PC-9 (cell line): ENCODE measurements at regions of chr4 and their contacts with region 1.

Region 1: GRCh38 chr4:68175562-68176155 is 46.0 kb upstream of the TMPRSS11F start:
- DNase-seq: peak; percentile 27 to 36
- H3K4me3 ChIP-seq: no peak overlapping the region
- H3K27ac ChIP-seq: no peak overlapping the region
- H3K4me1 ChIP-seq: peaks cover 2% of the 10 kb centered on the region
- H3K27me3 ChIP-seq: no peaks in the 10 kb centered on the region
- CTCF ChIP-seq: peak; percentile 75

Region 2: GRCh38 chr4:67871867-67872266 is 303.8 kb before region 1 on chr4:
- CTCF ChIA-PET with region 1: no interaction called
- POLR2A ChIA-PET with region 1: no interaction called
- intact Hi-C with region 1: loop called (anchors 2 kb)
- DNase-seq: no peak
- H3K4me3 ChIP-seq: no peak overlapping the region
- H3K27ac ChIP-seq: no peak overlapping the region
- H3K4me1 ChIP-seq: no peaks in the 10 kb centered on the region
- H3K27me3 ChIP-seq: no peaks in the 10 kb centered on the region
- CTCF ChIP-seq: peak; percentile 59

Region 3: DNA sequence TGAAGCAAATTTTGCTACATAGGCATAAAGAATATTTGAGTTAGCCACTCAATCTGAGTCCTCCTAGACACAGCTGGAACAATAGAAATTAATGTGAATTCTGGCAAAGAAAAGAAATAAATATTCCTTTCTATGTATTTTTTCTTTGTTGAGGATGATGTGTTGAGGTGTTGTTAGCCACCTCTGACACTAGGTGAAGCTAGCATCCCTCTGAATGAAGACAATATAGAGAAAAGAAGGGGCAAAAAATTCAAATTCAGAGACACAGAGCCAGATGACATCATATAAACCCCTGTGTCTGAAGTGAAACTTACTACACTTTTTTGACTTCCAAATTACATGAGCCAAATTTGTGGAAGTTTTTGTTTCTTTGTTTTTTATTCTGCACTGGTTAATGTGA is 257.2 kb before region 1 on chr4:
- CTCF ChIA-PET with region 1: no interaction called
- POLR2A ChIA-PET with region 1: no interaction called
- intact Hi-C with region 1: loop called (anchors 1 kb)
- DNase-seq: no peak
- H3K4me3 ChIP-seq: no peak overlapping the region
- H3K27ac ChIP-seq: no peak overlapping the region
- H3K4me1 ChIP-seq: no peaks in the 10 kb centered on the region
- H3K27me3 ChIP-seq: no peaks in the 10 kb centered on the region
- CTCF ChIP-seq: peak; percentile 60

Region 4: DNA sequence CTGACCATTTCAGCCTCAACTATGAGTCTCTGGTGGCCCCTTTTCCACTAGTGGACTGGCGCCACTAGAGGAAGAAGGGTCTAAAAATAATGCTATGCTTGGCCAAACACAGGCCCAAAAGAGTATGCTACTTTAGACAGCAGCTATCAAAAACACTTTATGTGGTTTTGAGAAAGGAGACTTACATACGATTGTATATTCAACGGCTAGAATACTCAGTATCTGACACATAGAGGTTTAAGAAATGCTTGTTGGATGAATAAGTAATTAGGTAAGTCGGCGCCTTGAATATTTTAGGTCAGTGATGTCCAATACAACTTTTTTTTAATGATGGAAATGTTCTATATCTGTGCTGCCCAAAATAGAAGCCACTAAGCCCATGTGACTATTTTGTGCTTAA is 186.7 kb before region 1 on chr4:
- CTCF ChIA-PET with region 1: no interaction called
- POLR2A ChIA-PET with region 1: no interaction called
- intact Hi-C with region 1: loop called (anchors 1 kb)
- DNase-seq: no peak
- H3K4me3 ChIP-seq: no peak overlapping the region
- H3K27ac ChIP-seq: no peak overlapping the region
- H3K4me1 ChIP-seq: no peaks in the 10 kb centered on the region
- H3K27me3 ChIP-seq: no peaks in the 10 kb centered on the region
- CTCF ChIP-seq: no peak

Region 5: GRCh38 chr4:68074388-68074787 is 101.3 kb before region 1 on chr4:
- CTCF ChIA-PET with region 1: no interaction called
- POLR2A ChIA-PET with region 1: no interaction called
- intact Hi-C with region 1: loop called (anchors 10 kb)
- DNase-seq: peak in 1 of 2 experiments; percentile 35
- H3K4me3 ChIP-seq: no peak overlapping the region
- H3K27ac ChIP-seq: no peak overlapping the region
- H3K4me1 ChIP-seq: no peaks in the 10 kb centered on the region
- H3K27me3 ChIP-seq: no peaks in the 10 kb centered on the region
- CTCF ChIP-seq: no peak

Region 6: GRCh38 chr4:68257719-68258118 is 82.1 kb after region 1 on chr4:
- CTCF ChIA-PET with region 1: no interaction called
- POLR2A ChIA-PET with region 1: no interaction called
- intact Hi-C with region 1: no loop called
- DNase-seq: no peak
- H3K4me3 ChIP-seq: no peak overlapping the region
- H3K27ac ChIP-seq: no peak overlapping the region
- H3K4me1 ChIP-seq: no peaks in the 10 kb centered on the region
- H3K27me3 ChIP-seq: no peaks in the 10 kb centered on the region
- CTCF ChIP-seq: no peak

Region 7: DNA sequence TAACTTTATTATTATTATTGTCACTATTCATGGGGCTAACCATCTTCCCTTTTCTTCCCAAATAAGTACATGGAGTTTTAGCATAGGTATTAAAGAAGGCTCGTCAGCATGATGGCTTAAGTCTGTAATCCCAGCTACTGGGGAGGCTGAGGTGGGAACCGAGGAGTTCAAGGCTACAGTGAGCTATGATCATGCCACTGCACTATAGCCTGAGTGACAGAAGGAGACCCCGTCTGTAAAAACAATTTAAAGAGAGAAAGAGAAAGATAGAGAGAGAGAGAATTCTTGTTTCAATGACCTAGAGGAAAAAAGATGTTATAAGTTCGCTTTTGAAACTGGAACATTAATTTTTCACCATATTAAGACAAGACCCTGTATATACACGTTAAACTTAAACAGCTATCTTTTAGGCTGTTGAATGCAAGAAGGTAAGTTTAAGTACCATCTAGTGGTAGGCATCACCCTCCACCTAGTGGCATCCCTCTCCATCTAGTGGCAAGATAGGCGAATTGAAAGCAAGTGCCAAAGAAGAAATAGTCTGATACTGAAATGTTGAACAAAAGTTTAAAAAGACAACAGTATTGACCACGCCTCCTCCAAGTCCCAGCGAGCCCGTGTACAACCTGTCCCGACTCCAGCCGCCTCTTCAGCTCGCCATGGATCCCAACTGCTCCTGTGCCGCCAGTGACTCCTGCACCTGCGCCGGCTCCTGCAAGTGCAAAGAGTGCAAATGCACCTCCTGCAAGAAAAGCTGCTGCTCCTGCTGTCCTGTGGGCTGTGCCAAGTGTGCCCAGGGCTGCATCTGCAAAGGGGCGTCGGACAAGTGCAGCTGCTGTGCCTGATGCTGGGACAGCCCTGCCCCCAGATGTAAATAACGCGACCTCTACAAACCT is 200.3 kb after region 1 on chr4:
- CTCF ChIA-PET with region 1: no interaction called
- POLR2A ChIA-PET with region 1: no interaction called
- intact Hi-C with region 1: loop called (anchors 2 kb)
- DNase-seq: peak; percentile 40 to 65
- H3K4me3 ChIP-seq: peak overlapping the region; percentile 62; the same call in 1 of the 2 replicates
- H3K27ac ChIP-seq: no peak overlapping the region
- H3K4me1 ChIP-seq: 0 out of 2 replicates have a peak, but pooled peaks cover 7% of the 10 kb centered on the region
- H3K27me3 ChIP-seq: no peaks in the 10 kb centered on the region
- CTCF ChIP-seq: peak; percentile 79